Ovary (tissue), 10 donors: ENCODE measurements at regions of chr2 and their contacts with region 1.

Region 1: DNA sequence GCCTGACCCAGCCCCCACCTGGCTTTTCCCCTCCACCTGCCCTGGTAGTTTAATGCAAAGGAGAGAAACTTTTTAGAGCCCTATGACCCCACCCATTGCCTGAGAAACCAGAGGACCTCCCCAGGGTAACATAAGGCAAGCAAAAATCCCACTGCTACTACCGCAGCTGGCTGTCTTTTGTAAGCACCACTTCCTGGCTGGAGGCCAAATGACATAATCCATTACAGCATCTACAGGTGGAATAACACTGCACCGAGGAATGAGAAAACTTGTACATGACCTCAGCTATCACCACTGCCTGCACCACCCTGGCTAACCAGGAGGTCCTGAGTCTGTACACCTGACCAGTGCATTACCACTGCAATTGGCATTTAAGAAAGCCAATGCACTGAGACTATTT is 149.6 kb upstream of the GALNT5 start:
- DNase-seq: no peak
- H3K4me3 ChIP-seq: no peak overlapping the region
- H3K27ac ChIP-seq: no peak overlapping the region
- H3K4me1 ChIP-seq: no peaks in the 10 kb centered on the region
- H3K27me3 ChIP-seq: no peaks in the 10 kb centered on the region
- CTCF ChIP-seq: no peak
- EP300 ChIP-seq: no peak
- POLR2A ChIP-seq: no peak

Region 2: DNA sequence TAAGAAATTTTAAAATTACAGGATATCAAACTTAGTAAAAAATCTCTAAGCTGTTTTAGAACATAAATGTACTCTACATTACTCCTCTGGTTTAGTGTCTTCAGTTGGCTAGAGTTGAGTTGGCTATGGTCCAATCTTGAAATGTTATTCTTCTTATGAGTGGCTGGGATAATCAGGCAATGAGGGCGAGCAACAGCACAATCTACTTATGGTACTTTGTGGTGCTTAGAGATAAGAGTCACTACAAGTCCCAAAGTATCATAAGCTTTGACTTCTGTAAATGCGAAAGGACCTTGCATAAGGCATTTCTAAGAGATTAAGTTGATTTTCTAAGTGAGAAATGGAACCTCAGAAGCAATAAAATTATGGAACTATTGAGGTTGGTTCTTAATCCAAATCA is 310.0 kb before region 1 on chr2:
- intact Hi-C with region 1: no loop called
- DNase-seq: no peak
- H3K4me3 ChIP-seq: no peak overlapping the region
- H3K27ac ChIP-seq: no peak overlapping the region
- H3K4me1 ChIP-seq: no peaks in the 10 kb centered on the region
- H3K27me3 ChIP-seq: no peaks in the 10 kb centered on the region
- CTCF ChIP-seq: no peak
- EP300 ChIP-seq: no peak
- POLR2A ChIP-seq: no peak

Region 3: DNA sequence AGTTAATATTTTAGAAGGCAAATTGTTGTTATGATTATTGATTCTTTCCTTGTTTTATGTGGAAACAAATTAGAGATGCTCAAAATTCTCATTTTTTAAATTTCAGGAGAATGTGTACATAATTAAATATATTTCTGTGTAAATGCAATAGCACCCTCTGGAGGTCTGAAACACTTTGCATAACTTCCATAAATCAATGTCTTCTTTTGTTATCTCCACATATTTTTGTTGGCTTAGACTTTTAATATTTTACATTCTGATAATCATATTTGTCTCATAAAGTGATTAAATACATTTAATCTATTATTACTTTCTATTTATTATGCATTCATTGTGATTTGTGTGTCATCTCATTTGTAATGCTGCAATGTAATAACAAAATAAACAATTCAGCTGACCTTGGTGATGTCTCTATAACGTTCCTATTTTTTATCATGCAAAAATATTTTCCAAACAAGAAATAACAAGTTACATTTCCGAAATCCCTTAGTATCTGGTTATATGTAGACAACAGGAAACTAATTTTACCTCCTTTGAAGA is 52.1 kb before region 1 on chr2:
- intact Hi-C with region 1: no loop called
- DNase-seq: no peak
- H3K4me3 ChIP-seq: no peak overlapping the region
- H3K27ac ChIP-seq: no peak overlapping the region
- H3K4me1 ChIP-seq: no peaks in the 10 kb centered on the region
- H3K27me3 ChIP-seq: no peaks in the 10 kb centered on the region
- CTCF ChIP-seq: no peak
- EP300 ChIP-seq: no peak
- POLR2A ChIP-seq: no peak

Region 4: GRCh38 chr2:157076526-157077161 is 31.2 kb before region 1 on chr2:
- intact Hi-C with region 1: loop called in 1 of 4 experiments (anchors 2 kb)
- DNase-seq: no peak
- H3K4me3 ChIP-seq: no peak overlapping the region
- H3K27ac ChIP-seq: no peak overlapping the region
- H3K4me1 ChIP-seq: no peaks in the 10 kb centered on the region
- H3K27me3 ChIP-seq: no peaks in the 10 kb centered on the region
- CTCF ChIP-seq: no peak
- EP300 ChIP-seq: no peak
- POLR2A ChIP-seq: no peak